HCT116 (cell line): ENCODE measurements at regions of chr18 and their contacts with region 1.

Region 1: DNA sequence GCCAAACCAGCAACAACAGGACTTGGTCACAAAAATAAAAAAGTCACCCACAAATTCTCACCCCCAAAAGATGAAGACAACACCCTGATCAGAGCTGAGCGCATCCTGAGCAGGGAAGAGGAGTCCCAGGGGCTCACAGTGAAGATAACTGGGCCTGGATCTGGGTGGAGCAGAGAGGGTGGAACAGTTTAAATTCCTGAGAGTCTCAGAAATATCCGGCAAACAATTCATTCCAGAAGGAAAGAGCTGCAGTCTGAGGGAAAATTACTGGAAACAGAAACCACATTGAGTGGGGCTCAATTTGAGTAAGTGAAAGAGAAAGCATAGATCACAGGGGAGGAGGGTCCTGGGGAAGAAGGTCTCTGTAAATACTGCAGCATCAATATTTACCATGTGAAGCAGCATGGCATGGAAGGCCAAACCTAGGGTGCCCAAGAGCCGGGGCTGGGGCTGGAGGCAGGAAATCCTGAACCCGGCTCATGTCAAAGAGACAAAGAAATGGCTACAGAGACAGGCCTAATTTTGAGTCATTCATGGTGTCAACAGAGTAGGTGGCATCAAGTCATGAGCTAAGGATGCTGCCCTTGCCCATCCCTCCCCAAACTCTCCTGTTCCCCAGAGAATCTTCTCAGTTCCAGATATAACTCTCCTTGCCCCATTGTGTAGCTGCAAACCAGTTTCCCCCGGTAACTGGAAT is 61.4 kb upstream of the ZBTB7C start:
- DNase-seq: no peak
- ATAC-seq: no peak
- H3K4me3 ChIP-seq: no peak overlapping the region
- H3K27ac ChIP-seq: no peak overlapping the region
- H3K4me1 ChIP-seq: no peaks in the 10 kb centered on the region
- H3K27me3 ChIP-seq: 0 out of 2 replicates have a peak, but pooled peaks cover 1% of the 10 kb centered on the region
- CTCF ChIP-seq: no peak
- POLR2A ChIP-seq: no peak
- RAD21 ChIP-seq: no peak

Region 2: DNA sequence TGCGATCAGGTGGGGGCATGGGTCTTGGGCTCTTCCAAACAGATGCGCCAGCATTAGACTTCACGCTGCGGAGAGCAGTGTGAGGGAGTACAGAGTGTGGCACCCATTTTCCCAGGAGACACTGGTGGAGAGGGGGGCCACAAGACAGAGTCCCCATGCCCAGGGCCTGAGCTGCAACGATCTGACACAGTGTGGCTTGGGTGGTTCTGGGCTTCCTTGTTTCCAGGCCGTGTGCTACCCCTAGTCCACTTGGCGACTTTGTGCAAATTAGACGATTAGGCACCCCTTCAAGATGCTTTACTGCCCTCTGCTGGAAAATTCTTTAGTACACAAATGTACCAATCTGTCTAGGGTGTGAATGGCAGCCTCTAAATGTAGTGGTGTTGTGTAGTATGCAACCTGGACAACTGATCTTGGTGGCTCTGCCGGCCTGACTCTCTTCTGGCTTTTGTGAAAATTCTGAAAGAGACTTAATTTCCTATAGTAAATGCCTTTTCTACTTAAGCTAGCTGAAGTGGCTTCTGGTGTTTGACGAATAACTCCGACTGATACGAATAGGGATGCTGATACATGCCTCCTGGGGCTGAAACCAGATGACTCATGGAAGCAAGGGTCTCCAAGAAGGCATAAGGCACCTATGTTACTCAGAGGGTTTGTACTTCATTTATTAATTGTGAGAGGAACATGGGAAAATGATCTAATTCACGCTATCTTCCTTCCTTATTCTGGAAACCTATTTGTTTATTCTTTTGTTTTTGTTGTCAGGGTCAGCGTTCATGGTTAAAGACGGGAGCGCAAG is 447.9 kb before region 1 on chr18:
- CTCF ChIA-PET with region 1: no interaction called
- POLR2A ChIA-PET with region 1: no interaction called
- RAD21 ChIA-PET with region 1: no interaction called
- intact Hi-C with region 1: loop called (anchors 1 kb)
- DNase-seq: peak; percentile 62
- ATAC-seq: peak; percentile 83
- H3K4me3 ChIP-seq: no peak overlapping the region
- H3K27ac ChIP-seq: no peak overlapping the region
- H3K4me1 ChIP-seq: peaks cover 4 to 8% of the 10 kb centered on the region in 2 experiments; a peak in 3 of 4 replicates
- H3K27me3 ChIP-seq: no peaks in the 10 kb centered on the region; the same call in 1 of the 2 replicates
- CTCF ChIP-seq: peak; percentile 51 to 81 (median 66); a peak in 5 of 6 replicates
- POLR2A ChIP-seq: no peak
- RAD21 ChIP-seq: peak; percentile 88

Region 3: DNA sequence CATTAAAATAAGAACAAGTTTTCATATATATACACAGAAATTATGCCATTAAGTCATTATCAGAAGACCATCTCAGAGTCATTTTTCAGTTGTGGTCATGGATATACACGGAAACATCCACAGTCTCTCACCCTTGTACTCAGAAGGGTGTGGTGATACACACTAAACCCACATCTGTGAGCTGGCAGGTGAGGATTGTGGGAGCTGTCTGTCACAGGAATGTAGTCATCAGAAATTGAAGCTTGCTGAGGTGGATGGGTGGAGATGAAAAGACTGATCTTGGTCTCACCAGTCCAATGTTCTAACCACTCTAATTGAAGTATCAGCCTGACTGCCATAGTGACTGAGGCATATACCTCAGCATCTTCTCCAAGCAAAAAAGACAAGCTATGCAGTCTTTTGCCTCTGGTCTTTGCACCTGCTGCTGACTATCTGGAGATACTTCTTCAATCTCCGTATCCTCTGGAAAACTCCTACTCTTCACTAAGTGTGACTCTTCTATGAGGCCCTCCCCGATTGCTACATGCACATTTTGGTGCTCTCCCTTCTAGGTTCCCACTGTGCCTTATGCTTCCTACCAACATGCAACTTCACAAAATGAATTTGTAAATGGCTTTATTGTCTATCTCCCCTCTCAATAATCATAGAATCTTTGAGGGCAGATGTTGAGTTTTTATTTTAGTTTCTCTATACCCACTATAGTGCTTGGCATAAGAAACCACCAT is 757.0 kb after region 1 on chr18:
- CTCF ChIA-PET with region 1: no interaction called
- POLR2A ChIA-PET with region 1: no interaction called
- RAD21 ChIA-PET with region 1: no interaction called
- intact Hi-C with region 1: loop called (anchors 5 kb)
- DNase-seq: no peak
- ATAC-seq: 0 out of 2 replicates have a peak, but pooled peaks have one; percentile 32
- H3K4me3 ChIP-seq: no peak overlapping the region
- H3K27ac ChIP-seq: no peak overlapping the region
- H3K4me1 ChIP-seq: no peaks in the 10 kb centered on the region; a peak in 1 of 4 replicates
- H3K27me3 ChIP-seq: no peaks in the 10 kb centered on the region
- CTCF ChIP-seq: no peak
- POLR2A ChIP-seq: no peak
- RAD21 ChIP-seq: no peak